ENCODE measurements at regions of chr7 and their contacts with region 1.

Region 1: DNA sequence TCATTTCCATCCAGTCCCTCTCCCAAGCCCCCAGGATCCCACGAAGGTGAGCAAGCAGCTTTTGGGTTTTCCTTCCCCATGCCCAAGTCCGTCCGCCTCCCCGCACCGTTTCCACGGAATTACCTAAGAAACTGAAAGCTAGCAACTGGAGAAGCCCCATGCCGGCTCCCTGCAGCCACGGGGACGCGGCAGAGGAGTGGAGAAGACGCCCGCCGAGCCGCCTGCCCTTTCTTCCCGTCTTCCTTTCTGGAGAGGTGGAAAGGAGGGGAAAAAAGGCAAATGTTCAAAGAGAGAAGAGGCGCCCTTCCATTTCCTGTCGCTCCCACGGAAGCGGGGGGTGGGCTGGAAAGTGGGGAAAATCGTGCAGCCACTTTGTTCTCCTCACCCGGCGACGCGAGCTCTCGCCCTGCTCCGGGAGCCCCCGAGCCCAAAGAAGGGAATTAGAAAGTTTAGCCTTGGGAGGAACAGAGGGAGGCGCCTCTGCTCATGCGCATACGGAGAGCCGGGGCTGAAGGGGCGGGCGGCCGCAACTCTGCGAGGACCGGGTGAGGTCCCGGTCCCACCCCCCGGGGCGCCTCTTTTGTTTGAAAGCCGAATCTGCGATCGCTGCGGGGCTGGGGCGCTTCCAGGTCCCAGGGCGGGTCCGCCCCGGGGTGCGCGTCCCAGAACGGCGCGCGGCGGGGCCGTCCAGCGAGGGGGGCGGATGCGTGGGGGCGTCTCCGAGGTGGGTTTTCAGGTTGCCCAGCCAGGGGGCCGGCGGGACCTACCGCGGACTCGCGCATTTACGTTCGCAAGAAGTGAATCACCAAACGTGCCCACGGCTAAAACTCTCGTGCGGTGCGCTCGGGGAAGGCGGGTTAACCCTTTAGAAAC is at the start of gene LAMB1:
- DNase-seq: peak; percentile 75
- H3K4me3 Mint-ChIP-seq: peak within 1 kb of the TSS; percentile 86
- H3K27ac Mint-ChIP-seq: peak within 1 kb of the TSS; percentile 41
- H3K4me1 Mint-ChIP-seq: peaks cover 16% of the 10 kb centered on the region
- H3K27me3 Mint-ChIP-seq: no peaks in the 10 kb centered on the region
- CTCF ChIP-seq: no peak
- total RNA-seq, gene LAMB1: 199 and 275 TPM in 2 replicates

Region 2: DNA sequence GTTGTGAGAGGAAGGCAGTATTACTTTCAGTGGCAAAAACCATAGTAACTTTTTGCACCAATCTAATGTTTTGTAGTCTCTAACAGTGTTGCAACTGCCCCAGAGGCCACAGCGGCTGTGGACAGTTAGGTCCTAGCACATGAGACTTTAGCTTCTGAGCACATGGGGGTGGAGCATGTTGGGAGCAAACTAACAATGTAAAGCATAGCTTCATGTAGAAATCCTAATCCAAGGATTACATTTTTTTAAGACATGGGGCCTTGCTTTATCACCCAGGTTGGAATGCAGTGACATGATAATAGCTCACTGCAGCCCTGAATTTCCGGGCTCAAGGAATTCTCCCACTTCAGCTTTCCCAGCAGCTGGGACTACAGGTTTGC is 49.0 kb before region 1 on chr7:
- CTCF ChIA-PET with region 1: no interaction called
- POLR2A ChIA-PET with region 1: interaction called, 40 read pairs
- intact Hi-C with region 1: loop called (anchors 5 kb)
- DNase-seq: no peak
- H3K4me3 Mint-ChIP-seq: no peak overlapping the region
- H3K27ac Mint-ChIP-seq: peak overlapping the region; percentile 35
- H3K4me1 Mint-ChIP-seq: peaks cover 32% of the 10 kb centered on the region
- H3K27me3 Mint-ChIP-seq: no peaks in the 10 kb centered on the region
- CTCF ChIP-seq: no peak

Region 3: DNA sequence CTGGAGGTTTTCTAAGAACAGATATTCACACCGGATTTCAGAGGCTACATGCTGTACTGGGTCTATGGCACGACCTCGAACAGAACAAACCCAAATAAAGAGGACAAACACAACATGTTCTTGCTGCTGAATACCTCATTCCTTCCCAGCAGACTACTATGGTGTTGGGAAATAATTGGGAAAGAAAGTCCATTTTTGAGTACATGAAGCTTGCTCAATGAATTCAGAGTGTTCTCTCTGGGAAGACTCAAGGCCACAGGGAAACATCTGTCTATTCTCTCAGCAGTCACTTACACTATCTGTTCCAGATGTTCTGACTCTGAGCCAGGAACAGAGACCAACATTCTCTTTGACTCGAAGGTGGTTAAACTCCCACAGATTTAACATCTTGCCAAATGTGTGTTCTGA is 30.9 kb before region 1 on chr7:
- CTCF ChIA-PET with region 1: interaction called, 4 read pairs
- POLR2A ChIA-PET with region 1: interaction called, 86 read pairs
- intact Hi-C with region 1: no loop called
- DNase-seq: peak; percentile 91
- H3K4me3 Mint-ChIP-seq: peak overlapping the region; percentile 36
- H3K27ac Mint-ChIP-seq: peak overlapping the region; percentile 88
- H3K4me1 Mint-ChIP-seq: peaks cover 36% of the 10 kb centered on the region
- H3K27me3 Mint-ChIP-seq: no peaks in the 10 kb centered on the region
- CTCF ChIP-seq: no peak

Region 4: DNA sequence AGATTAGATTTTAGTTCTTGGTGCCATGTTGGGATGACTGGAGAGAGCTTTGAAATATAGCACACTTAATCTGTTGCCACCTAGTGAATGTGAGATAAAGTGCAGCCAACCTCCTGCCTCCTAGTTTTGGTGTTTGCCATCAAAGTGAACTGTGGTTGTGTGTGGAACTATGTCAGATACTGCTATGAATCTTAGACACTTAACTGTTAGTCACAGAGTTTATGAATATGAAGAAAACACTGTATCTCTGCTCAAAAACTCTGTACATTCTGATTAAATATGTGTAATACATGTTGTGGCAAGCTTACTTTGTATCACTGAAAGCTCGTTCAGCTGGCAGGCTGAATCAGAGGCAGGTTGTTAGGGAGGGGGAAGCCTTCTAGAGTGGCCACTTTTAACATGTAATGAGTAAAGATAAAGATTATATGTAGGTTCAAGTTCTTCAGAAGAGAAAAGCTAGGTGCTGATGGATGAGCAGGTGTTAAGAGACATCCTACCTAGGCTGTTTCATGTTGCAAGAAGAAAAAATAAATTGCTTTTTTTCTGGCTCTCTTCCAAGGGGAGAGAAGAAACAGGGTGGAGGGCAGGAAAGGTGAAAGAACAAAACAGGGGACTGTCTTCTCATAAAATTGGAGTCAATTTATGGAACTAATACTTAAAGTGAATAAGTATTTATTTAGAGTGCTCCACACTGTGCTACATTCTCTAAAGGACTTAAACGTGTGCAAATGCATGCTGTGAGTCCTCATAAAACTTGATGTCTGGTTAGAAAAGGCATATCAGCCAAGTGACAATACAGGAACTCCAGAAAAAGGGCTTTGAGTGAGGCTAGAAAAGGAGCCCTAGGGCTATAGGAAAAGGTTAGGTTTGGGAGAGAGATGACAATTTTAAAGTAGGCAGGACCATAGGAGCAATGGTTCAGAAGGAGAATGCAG is 14.1 kb after region 1 on chr7:
- CTCF ChIA-PET with region 1: interaction called, 23 read pairs
- POLR2A ChIA-PET with region 1: interaction called, 52 read pairs
- intact Hi-C with region 1: no loop called
- DNase-seq: peak; percentile 65
- H3K4me3 Mint-ChIP-seq: no peak overlapping the region
- H3K27ac Mint-ChIP-seq: no peak overlapping the region
- H3K4me1 Mint-ChIP-seq: peaks cover 11% of the 10 kb centered on the region
- H3K27me3 Mint-ChIP-seq: no peaks in the 10 kb centered on the region
- CTCF ChIP-seq: peak; percentile 40

Region 5: GRCh38 chr7:108094933-108095710 is 92.2 kb after region 1 on chr7:
- CTCF ChIA-PET with region 1: interaction called, 5 read pairs
- POLR2A ChIA-PET with region 1: interaction called, 4 read pairs
- intact Hi-C with region 1: loop called (anchors 2 kb)
- DNase-seq: peak; percentile 85
- H3K4me3 Mint-ChIP-seq: no peak overlapping the region
- H3K27ac Mint-ChIP-seq: no peak overlapping the region
- H3K4me1 Mint-ChIP-seq: peaks cover 16% of the 10 kb centered on the region
- H3K27me3 Mint-ChIP-seq: peaks cover 10% of the 10 kb centered on the region
- CTCF ChIP-seq: no peak